ENCODE measurements at regions of chr15 and their contacts with region 1.

Region 1: DNA sequence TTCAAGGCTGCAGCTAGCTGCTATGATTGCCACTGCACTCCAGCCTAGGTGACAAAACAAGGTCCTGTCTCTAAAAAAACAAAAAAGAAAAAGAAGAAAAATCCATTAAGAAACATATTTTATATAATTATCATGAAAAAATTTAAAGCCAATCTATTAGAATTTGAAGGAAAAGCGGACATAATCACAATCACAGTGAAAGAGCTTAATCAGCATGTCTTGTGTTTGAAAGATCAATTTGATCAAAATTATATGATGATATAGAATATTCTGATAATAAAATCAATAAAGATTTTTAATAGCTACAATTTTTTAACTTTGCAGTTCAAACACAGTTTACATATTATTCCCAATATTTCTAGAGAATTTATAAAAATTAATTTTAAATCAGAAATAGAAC is 210.1 kb downstream of the MEX3B start:
- H3K4me3 ChIP-seq: no peak overlapping the region
- H3K27ac ChIP-seq: no peak overlapping the region
- H3K4me1 ChIP-seq: no peaks in the 10 kb centered on the region
- CTCF ChIP-seq: no peak

Region 2: GRCh38 chr15:81724536-81724935 is 111.2 kb before region 1 on chr15:
- CTCF ChIA-PET with region 1: no interaction called
- POLR2A ChIA-PET with region 1: no interaction called
- H3K4me3 ChIP-seq: no peak overlapping the region
- H3K27ac ChIP-seq: no peak overlapping the region
- H3K4me1 ChIP-seq: peaks cover 7% of the 10 kb centered on the region; the same call in 1 of the 2 replicates
- CTCF ChIP-seq: no peak

Region 3: DNA sequence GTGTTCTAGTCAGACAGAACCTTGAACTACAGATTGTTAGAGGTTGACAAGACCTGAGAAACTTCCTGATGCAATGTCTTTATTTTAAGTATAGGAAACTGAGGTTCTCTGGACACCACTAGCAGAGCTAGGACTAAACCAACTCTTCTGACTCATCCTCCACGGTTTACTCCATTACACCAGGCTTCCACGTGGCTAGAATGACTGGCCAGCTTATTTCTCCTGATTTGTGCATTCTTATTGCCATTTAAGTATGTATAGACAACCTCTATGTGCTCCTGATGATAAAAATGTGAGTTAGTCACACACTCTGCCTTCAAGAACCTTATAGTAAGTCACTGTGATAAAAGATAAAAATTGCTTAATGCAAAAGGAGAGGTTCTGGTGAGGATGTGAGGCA is 27.4 kb after region 1 on chr15:
- CTCF ChIA-PET with region 1: interaction called, 10 read pairs
- POLR2A ChIA-PET with region 1: no interaction called
- H3K4me3 ChIP-seq: no peak overlapping the region
- H3K27ac ChIP-seq: no peak overlapping the region
- H3K4me1 ChIP-seq: 0 out of 2 replicates have a peak, but pooled peaks cover 2% of the 10 kb centered on the region
- CTCF ChIP-seq: no peak